SK-N-SH (cell line): ENCODE measurements at regions of chrX and their contacts with region 1.

Region 1: DNA sequence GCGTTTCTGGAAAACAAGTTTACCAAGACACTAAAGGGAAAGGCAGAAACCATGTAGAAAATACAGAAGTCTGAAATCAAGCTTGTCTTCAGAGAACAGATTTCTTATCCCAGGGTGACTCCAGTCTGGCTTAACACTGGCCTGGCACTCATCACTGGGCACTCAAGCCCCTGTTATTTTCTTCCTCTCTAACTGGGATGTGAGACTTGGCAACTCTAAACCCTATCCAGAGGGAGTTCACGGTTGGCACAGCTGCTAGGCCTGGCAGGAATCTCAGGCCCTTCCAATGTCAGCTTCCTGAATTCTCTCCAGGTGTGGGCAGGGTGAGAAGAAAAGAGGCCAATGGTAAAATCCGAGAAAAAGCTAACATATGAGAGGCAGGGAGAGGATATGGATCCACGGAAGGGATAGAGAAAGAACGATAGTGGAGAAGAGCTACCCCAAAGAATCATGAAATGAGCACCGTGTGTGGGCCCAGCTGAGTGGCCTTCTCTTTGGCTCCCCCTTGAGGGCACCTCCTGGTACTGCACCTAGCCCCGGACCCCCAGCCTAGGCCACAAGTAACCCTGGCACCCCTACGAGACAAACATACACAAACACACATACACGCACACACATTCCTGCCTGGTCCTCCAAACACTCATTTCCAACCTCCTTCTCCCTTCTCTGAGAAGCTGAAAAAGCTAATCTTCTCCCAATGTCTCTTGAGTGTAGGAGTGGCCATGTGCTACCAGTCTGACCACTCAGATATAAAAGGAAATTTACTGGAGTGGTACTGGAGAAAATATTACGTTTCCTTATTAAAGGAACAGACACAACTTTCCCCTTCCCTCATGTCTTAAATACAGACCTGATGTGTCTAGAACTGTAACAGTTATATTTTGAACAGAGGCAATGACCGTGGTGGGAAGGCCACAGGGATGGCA is 16.6 kb upstream of the PTCHD1 start:
- DNase-seq: peak; percentile 69
- H3K4me3 ChIP-seq: no peak overlapping the region
- H3K27ac ChIP-seq: no peak overlapping the region
- H3K4me1 ChIP-seq: no peaks in the 10 kb centered on the region
- H3K27me3 ChIP-seq: no peaks in the 10 kb centered on the region
- CTCF ChIP-seq: peak; percentile 83
- EP300 ChIP-seq: no peak
- RAD21 ChIP-seq: peak; percentile 69

Region 2: GRCh38 chrX:23008431-23009099 is 309.5 kb before region 1 on chrX:
- CTCF ChIA-PET with region 1: interaction called, 14 read pairs
- POLR2A ChIA-PET with region 1: no interaction called
- DNase-seq: peak; percentile 20
- H3K4me3 ChIP-seq: no peak overlapping the region
- H3K27ac ChIP-seq: no peak overlapping the region
- H3K4me1 ChIP-seq: peaks cover 0 to 6% of the 10 kb centered on the region in 2 experiments; a peak in 2 of 4 replicates
- H3K27me3 ChIP-seq: no peaks in the 10 kb centered on the region
- CTCF ChIP-seq: peak; percentile 56
- EP300 ChIP-seq: no peak
- RAD21 ChIP-seq: peak; percentile 64

Region 3: GRCh38 chrX:23304881-23305280 is 13.2 kb before region 1 on chrX:
- CTCF ChIA-PET with region 1: interaction called, 13 read pairs
- POLR2A ChIA-PET with region 1: no interaction called
- DNase-seq: no peak
- H3K4me3 ChIP-seq: no peak overlapping the region
- H3K27ac ChIP-seq: no peak overlapping the region
- H3K4me1 ChIP-seq: no peaks in the 10 kb centered on the region
- H3K27me3 ChIP-seq: no peaks in the 10 kb centered on the region; the same call in 1 of the 2 replicates
- CTCF ChIP-seq: no peak
- EP300 ChIP-seq: no peak
- RAD21 ChIP-seq: no peak